ENCODE measurements at regions of chr4 and their contacts with region 1.

Region 1: DNA sequence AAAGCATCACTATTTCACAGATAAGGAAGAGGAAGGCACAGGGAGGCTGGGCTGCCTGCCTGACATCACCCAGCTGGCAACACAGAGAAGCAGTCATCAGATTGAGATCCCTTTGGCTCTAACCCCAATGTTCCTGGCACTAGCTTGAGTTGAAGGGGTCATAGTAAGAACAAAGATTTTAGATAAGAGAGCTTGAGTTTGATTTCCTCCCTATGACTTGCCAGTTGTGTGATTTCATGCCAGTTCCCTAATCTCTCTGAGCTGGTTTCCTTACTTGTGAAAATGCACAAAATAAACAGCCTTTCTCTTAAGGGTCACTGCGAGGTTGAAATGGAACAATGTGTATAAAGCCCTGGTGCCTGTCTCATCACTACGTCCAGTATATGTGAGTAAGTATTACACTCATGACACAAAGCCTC is 475.4 kb upstream of the HS3ST1 start:
- DNase-seq: peak; percentile 100
- H3K4me3 ChIP-seq: no peak overlapping the region
- H3K27ac ChIP-seq: peak overlapping the region; percentile 100
- H3K4me1 ChIP-seq: peaks cover 26% of the 10 kb centered on the region
- H3K27me3 ChIP-seq: no peaks in the 10 kb centered on the region
- CTCF ChIP-seq: no peak
- POLR2A ChIP-seq: peak; percentile 33

Region 2: GRCh38 chr4:11428899-11429698 is 475.0 kb before region 1 on chr4:
- CTCF ChIA-PET with region 1: interaction called, 3 read pairs
- POLR2A ChIA-PET with region 1: no interaction called
- dilution Hi-C with region 1: no loop called
- intact Hi-C with region 1: loop called (anchors 5 kb)
- DNase-seq: peak; percentile 75
- H3K4me3 ChIP-seq: peak overlapping the region; percentile 56 to 75 (median 72)
- H3K27ac ChIP-seq: no peak overlapping the region
- H3K4me1 ChIP-seq: peaks cover 23% of the 10 kb centered on the region
- H3K27me3 ChIP-seq: peaks cover 10 to 13% of the 10 kb centered on the region in 2 experiments
- CTCF ChIP-seq: peak; percentile 65 to 89
- POLR2A ChIP-seq: no peak

Region 3: DNA sequence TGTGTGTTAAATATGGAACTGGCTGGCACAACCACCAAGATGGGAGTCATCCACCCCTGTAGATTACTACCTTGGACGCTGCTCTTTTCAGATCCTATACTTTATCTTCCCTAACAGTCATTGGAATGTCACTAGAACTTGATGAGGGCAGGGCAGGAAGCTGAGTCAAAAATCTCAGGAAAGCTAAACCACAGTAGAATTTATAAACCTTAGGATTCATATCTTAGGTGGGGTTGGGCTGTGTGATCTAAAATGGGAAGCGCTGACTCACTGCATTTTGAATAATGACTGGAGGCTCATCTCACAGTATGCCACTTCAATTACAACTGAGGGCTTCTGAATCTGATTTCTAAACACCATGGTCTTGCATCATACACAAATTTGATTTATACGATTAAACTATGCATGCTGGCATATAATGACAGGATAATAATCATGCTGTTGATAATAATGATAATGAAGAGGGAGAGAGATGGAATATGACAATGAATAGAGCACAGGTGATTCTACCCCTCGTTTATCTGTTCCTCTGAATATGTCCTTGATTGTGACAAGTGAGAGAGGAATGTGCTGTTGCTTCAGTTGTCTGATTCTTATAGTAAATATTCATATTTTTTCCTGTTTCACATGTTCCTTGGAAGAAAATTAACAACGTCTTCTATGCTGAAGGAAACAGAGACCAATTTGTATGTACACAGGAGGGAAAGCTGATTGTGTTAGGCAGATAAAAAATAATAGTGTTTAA is 205.1 kb before region 1 on chr4:
- CTCF ChIA-PET with region 1: no interaction called
- POLR2A ChIA-PET with region 1: no interaction called
- dilution Hi-C with region 1: no loop called
- intact Hi-C with region 1: loop called (anchors 1 kb)
- DNase-seq: peak; percentile 77
- H3K4me3 ChIP-seq: no peak overlapping the region
- H3K27ac ChIP-seq: peak overlapping the region; percentile 76
- H3K4me1 ChIP-seq: peaks cover 40% of the 10 kb centered on the region
- H3K27me3 ChIP-seq: no peaks in the 10 kb centered on the region
- CTCF ChIP-seq: no peak
- POLR2A ChIP-seq: peak; percentile 11

Region 4: DNA sequence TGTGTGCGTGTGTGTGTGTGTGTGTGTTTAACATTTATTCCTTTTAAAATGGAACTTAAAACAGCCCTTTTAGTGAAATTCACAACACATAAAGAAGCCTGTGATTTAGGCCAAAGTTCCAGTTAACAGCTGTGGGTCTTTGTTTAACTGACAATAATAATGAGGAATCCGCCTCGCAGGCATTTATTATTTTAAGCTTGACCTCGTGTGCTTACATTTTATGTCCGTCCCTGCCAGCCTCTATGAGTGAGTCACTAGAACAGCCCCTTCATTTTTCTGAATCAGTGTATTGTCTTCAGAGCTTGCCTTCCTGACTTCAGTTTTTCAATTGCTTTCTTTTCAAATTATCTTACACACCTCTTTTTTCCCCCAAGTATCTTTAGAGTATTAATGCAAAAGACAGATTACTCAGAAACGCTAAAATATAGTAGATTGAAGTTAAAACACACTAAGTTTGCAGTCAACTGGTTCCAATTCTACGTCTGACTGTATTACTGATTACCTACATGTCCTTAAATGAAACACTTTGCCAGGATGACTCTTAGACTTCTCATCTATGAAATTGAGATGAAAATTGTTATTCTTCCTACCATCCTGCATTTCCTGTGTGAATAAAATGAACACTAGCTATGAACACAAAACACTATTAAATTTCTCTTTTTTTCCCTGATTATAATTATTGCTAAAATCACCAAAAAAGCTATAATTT is 155.8 kb before region 1 on chr4:
- CTCF ChIA-PET with region 1: interaction called, 8 read pairs
- POLR2A ChIA-PET with region 1: interaction called, 3 read pairs
- dilution Hi-C with region 1: no loop called
- intact Hi-C with region 1: loop called (anchors 1 kb)
- DNase-seq: peak; percentile 96
- H3K4me3 ChIP-seq: peak overlapping the region in 1 of 3 experiments; percentile 48
- H3K27ac ChIP-seq: peak overlapping the region; percentile 85
- H3K4me1 ChIP-seq: peaks cover 48% of the 10 kb centered on the region
- H3K27me3 ChIP-seq: no peaks in the 10 kb centered on the region
- CTCF ChIP-seq: no peak
- POLR2A ChIP-seq: no peak

Region 5: DNA sequence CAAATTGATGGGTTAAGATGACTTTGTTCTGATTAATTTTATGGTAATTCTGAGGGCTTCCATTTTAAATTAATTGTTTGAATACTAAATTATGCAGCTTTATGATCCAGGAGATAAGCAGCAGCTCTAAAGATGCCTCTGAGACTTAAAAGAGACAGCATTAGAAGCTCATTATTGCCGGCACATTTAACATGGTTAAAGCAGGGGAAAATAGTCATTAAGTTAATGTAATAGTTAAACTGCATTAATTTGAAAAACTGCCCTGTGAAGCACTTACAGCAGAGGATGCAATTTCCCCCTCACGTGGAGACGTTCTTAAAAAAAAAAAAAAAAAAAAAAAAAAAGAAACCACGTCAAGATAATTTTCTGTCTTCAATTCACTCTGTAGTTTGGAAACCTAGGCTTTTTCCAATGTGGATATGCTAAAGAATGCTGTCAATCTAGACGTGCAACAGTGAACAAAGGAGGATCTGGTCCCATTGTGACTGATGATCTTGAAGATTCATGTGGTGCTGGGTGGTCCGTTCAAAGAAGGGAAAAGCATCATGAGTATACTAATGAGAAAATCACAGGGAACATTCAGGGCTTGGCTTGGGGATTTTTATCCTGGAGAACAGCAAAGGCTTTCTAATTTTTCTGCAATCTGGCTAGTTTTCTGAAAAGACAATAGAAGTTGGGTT is 34.8 kb before region 1 on chr4:
- CTCF ChIA-PET with region 1: interaction called, 3 read pairs
- POLR2A ChIA-PET with region 1: interaction called, 11 read pairs
- dilution Hi-C with region 1: no loop called
- intact Hi-C with region 1: no loop called
- DNase-seq: no peak
- H3K4me3 ChIP-seq: no peak overlapping the region
- H3K27ac ChIP-seq: no peak overlapping the region
- H3K4me1 ChIP-seq: no peaks in the 10 kb centered on the region
- H3K27me3 ChIP-seq: no peaks in the 10 kb centered on the region
- CTCF ChIP-seq: no peak
- POLR2A ChIP-seq: no peak